ENCODE measurements at regions of chr10 and their contacts with region 1.

Region 1: DNA sequence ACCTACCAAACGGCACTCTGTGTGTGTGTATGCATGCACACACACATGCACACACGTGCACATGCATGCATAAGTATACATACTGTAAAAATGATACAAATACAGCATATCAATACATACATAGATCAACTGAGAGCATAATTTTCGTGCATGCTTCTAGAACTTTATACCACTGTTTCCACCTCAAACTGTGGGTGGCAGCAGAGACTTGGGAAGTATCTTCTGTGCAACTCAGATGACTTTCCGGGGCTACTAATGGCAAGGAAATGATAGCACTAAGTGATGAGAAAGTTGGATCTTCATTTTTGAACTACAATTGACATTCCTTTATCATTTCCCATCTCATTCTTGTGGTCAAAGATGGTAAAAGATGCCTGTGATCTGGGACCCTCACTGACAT is 570.7 kb downstream of the REEP3 start:
- DNase-seq: peak; percentile 72
- ATAC-seq: peak; percentile 40
- H3K4me3 ChIP-seq: no peak overlapping the region
- H3K27ac ChIP-seq: no peak overlapping the region
- H3K4me1 ChIP-seq: peaks cover 35% of the 10 kb centered on the region
- H3K27me3 ChIP-seq: no peaks in the 10 kb centered on the region
- CTCF ChIP-seq: peak; percentile 86

Region 2: GRCh38 chr10:64059884-64060283 is 32.0 kb before region 1 on chr10:
- CTCF ChIA-PET with region 1: no interaction called
- POLR2A ChIA-PET with region 1: no interaction called
- intact Hi-C with region 1: no loop called
- DNase-seq: no peak
- ATAC-seq: no peak
- H3K4me3 ChIP-seq: no peak overlapping the region
- H3K27ac ChIP-seq: no peak overlapping the region
- H3K4me1 ChIP-seq: no peaks in the 10 kb centered on the region
- H3K27me3 ChIP-seq: peaks cover 16% of the 10 kb centered on the region; the same call in 1 of the 2 replicates
- CTCF ChIP-seq: no peak

Region 3: DNA sequence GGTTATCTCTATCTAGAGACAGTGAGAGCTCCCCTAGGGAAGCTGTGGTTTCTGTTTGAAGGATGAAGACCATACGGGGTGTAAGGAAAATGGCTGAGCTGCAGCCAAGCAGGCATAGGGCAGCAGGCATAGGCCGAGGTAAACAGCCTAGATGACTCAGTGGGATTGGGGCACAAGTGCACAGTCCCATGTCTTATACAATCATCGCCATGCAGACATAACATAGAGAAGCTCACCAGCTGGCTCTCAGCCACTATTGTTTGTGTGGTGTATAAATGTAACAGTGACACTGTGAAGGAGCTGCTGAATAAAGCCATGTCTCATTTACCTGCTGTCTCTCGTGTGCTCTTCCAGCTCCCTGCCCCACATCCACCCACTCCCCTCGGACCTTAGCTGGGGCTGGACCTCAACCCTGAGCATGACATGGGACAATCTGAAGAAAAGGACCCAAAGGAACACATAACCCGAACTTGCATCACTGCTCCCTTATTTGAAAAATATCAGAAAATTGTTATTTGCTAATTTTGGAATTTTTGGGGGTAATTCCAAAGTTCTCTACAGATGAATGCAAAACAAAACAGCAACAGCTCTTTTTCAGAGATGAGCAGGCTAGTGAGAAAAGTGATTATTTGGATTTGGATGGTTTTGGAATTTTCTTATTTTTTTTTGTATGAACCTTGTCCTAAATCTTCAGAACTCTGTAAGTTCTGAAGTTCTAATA is 12.0 kb after region 1 on chr10:
- CTCF ChIA-PET with region 1: no interaction called
- POLR2A ChIA-PET with region 1: no interaction called
- intact Hi-C with region 1: no loop called
- DNase-seq: peak; percentile 56
- ATAC-seq: peak; percentile 45; the same call in 1 of the 2 replicates
- H3K4me3 ChIP-seq: no peak overlapping the region
- H3K27ac ChIP-seq: no peak overlapping the region
- H3K4me1 ChIP-seq: no peaks in the 10 kb centered on the region
- H3K27me3 ChIP-seq: no peaks in the 10 kb centered on the region
- CTCF ChIP-seq: no peak

Region 4: DNA sequence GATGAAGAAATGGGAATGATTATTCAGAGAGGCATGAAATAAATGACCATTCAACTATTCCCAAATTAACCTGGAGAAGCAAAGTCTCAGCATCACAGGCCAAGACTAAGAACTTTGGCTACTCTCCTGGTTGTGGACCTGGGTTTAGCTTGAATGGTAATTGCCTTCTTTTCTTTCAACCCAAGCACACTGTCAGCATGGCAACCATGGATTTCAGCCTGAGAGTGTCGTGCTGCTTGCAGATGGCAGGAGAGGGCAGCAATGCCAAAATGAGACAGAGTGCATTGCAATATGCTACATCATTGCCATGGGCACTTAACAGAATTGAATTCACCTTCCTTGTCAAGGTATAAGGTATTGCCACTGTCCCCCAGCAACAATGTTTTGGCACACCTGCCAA is 196.5 kb after region 1 on chr10:
- CTCF ChIA-PET with region 1: no interaction called
- POLR2A ChIA-PET with region 1: no interaction called
- intact Hi-C with region 1: loop called (anchors 1 kb)
- DNase-seq: no peak
- ATAC-seq: no peak
- H3K4me3 ChIP-seq: no peak overlapping the region
- H3K27ac ChIP-seq: no peak overlapping the region
- H3K4me1 ChIP-seq: no peaks in the 10 kb centered on the region
- H3K27me3 ChIP-seq: no peaks in the 10 kb centered on the region
- CTCF ChIP-seq: no peak

Region 5: GRCh38 chr10:64379898-64380297 is 288.0 kb after region 1 on chr10:
- CTCF ChIA-PET with region 1: interaction called, 4 read pairs
- POLR2A ChIA-PET with region 1: no interaction called
- intact Hi-C with region 1: loop called (anchors 1 kb)
- DNase-seq: peak; percentile 75
- ATAC-seq: peak; percentile 90
- H3K4me3 ChIP-seq: no peak overlapping the region
- H3K27ac ChIP-seq: no peak overlapping the region
- H3K4me1 ChIP-seq: no peaks in the 10 kb centered on the region
- H3K27me3 ChIP-seq: no peaks in the 10 kb centered on the region
- CTCF ChIP-seq: peak; percentile 81